PC-3 (cell line): ENCODE measurements at regions of chr17 and their contacts with region 1.

Region 1: DNA sequence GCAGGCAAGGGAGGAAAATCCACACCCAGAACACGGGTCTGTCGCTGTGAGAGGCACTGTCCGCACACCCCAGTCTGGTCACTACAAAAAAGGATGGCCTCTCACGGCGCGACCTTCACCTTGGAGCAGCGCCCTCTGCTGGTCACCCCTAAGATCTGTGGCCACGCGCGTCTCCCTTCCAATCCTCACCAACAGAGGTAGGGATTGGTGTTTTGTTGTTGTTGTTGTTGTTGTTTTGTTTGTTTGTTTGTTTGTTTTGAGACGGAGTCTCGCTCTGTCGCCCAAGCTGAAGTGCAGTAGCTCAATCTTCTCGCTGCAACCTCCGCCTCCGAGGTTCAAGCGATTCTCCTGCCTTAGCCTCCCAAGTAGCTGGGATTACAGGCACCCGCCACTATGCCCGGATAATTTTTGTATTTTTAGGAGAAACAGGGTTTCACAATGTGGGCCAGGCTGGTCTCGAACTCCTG is 15.0 kb upstream of the C17orf58 start:
- DNase-seq: peak; percentile 59
- ATAC-seq: peak; percentile 90
- H3K4me3 ChIP-seq: peak overlapping the region; percentile 48; the same call in 1 of the 2 replicates
- H3K27ac ChIP-seq: no peak overlapping the region
- H3K4me1 ChIP-seq: 0 out of 2 replicates have a peak, but pooled peaks cover 3% of the 10 kb centered on the region
- H3K27me3 ChIP-seq: no peaks in the 10 kb centered on the region
- CTCF ChIP-seq: peak; percentile 91

Region 2: DNA sequence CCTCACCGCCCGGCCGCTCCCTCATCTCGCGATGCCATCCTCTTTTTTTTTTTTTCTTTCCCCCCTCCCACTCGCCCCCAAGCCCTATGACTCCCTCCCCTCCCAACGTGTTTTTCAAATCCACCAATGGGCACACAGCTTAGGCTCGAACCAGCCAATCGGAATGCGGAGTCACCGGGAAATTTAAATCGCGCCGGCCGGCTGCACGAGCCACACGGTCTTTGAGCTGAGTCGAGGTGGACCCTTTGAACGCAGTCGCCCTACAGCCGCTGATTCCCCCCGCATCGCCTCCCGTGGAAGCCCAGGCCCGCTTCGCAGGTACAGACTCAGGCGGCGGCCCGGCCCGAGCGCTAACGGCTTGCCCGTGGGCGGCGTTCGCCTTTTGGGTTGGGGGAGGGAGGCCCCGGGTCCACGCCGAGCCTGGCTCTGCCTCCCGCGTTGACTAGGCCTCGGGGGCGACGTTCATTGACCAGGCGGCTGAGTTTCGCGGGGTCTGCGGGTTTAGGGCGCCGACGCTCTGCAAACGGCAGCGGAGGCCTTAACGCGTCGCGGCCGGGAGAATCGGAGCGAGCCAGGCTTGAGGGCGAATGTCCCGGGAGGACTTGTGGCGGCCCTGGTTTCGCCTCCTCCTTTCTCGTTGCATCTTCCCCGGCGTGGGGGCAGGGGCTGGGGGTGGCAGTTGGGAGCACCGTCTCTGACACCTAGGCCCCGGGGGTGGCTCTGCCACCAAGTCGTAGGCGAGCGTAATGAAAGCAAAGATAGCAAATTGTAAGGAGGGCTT is 24.5 kb after region 1 on chr17 and contains the start of gene KPNA2:
- CTCF ChIA-PET with region 1: no interaction called
- POLR2A ChIA-PET with region 1: no interaction called
- intact Hi-C with region 1: no loop called
- DNase-seq: peak; percentile 99
- ATAC-seq: peak; percentile 89
- H3K4me3 ChIP-seq: peak within 1 kb of the TSS; percentile 97
- H3K27ac ChIP-seq: peak within 1 kb of the TSS; percentile 66
- H3K4me1 ChIP-seq: peaks cover 24% of the 10 kb centered on the region
- H3K27me3 ChIP-seq: no peaks in the 10 kb centered on the region
- CTCF ChIP-seq: no peak
- total RNA-seq, gene KPNA2: 223 and 288 TPM in 2 replicates

Region 3: DNA sequence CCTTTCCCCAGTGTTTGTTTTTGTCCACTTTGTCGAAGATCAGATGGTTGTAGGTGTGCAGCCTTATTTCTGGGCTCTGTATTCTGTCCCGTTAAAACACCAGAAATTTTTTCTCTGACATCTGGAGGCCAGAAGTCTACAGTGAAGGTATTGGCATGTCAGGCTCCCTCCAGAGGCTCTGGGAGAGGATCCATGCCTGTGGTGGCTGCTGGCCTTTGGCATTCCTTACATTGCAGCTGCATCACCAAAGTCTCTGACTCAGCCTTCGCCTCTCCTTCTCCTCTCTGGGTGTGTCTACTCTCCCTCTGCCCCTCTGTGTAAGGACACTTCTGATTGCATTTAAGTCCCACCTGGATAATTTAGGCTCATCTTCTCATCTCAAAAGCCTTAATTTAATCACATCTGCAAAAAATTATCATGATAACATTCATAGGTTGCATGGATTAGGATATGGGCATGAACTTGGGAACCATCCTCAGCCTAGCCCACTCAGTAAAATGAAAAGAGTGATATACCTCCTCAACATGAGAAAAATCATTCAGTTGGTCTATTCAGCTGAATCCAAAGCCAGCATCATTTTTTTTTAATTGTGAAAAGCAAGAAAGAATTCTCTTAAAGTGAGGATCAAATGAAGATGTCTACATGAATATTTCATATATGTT is 1481.3 kb after region 1 on chr17:
- CTCF ChIA-PET with region 1: no interaction called
- POLR2A ChIA-PET with region 1: interaction called, 12 read pairs
- intact Hi-C with region 1: no loop called
- DNase-seq: peak; percentile 92
- ATAC-seq: peak; percentile 100
- H3K4me3 ChIP-seq: no peak overlapping the region
- H3K27ac ChIP-seq: no peak overlapping the region
- H3K4me1 ChIP-seq: peaks cover 13% of the 10 kb centered on the region
- H3K27me3 ChIP-seq: no peaks in the 10 kb centered on the region
- CTCF ChIP-seq: peak; percentile 32; the same call in 1 of the 2 replicates